ENCODE measurements at regions of chr11 and their contacts with region 1.

Region 1: DNA sequence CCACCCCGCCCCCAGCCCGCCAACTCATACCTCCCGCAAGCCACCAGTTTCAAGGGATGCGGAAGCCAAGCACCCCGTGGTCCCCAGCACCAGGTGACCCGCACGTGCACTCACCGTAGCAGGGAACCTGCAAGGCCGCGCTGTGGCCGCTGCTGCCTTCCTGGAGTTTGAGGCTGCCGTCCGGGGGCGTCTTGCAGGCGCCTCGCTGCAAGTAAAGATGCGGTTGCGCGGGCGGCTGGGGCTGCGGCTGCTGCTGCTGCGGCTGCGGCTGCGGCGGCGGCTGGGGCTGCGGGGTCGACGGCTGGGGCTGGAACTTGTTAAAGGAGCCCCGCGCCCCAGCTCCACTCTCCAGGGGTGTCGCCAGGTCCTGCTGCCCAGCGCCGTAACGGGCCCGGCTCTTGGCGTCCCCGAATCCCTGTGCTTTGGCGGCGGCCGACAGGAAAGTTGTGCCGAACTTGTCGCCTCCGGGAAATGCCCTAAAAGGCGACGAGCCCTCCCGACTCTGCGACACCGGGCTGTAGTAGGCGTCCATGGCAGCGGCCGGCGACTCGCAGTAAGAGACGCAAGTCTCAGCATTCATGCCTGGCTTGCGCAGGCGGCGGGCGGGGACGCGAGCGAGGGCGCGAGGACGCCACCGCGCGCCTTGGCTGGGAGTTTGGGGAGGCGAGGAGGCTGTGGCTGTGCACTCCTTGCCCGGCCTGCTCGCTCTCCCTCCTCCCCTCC is at the start of gene ALX4:
- DNase-seq: peak; percentile 71
- H3K4me3 Mint-ChIP-seq: peak within 1 kb of the TSS; percentile 51
- H3K27ac Mint-ChIP-seq: no peak within 1 kb of the TSS
- H3K4me1 Mint-ChIP-seq: peaks cover 24% of the 10 kb centered on the region
- H3K27me3 Mint-ChIP-seq: peaks cover 80% of the 10 kb centered on the region
- total RNA-seq, gene ALX4: not detected

Region 2: GRCh38 chr11:44319552-44320288 is 10.1 kb after region 1 on chr11:
- CTCF ChIA-PET with region 1: interaction called, 3 read pairs
- POLR2A ChIA-PET with region 1: no interaction called
- intact Hi-C with region 1: loop called (anchors 2 kb)
- DNase-seq: no peak
- H3K4me3 Mint-ChIP-seq: no peak overlapping the region
- H3K27ac Mint-ChIP-seq: no peak overlapping the region
- H3K4me1 Mint-ChIP-seq: peaks cover 15% of the 10 kb centered on the region
- H3K27me3 Mint-ChIP-seq: peaks cover 88% of the 10 kb centered on the region

Region 3: DNA sequence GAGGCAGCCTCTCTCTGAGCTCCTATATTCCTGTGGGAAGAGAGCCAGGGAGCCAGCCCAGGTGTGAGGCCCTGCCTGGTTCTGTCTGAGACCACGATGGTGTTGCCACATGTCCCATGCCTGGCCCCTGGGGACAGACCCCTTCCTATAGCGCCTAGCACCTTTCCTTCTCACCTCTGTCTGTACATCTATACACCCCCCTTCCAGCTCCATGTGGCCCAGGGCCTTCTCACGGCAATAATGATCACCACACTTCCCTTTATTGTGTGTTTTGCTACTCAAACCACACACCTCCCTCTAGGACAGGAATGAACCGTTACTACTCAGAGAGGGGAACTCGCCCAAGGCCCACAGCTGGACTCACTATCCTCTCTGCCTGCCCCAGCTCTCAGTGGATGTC is 268.6 kb after region 1 on chr11:
- CTCF ChIA-PET with region 1: no interaction called
- POLR2A ChIA-PET with region 1: no interaction called
- intact Hi-C with region 1: no loop called
- DNase-seq: peak; percentile 48
- H3K4me3 Mint-ChIP-seq: no peak overlapping the region
- H3K27ac Mint-ChIP-seq: peak overlapping the region; percentile 74
- H3K4me1 Mint-ChIP-seq: peaks cover 87% of the 10 kb centered on the region
- H3K27me3 Mint-ChIP-seq: no peaks in the 10 kb centered on the region

Measured in activated CD4-positive, alpha-beta memory T cell treated with anti-CD3 and anti-CD28 coated beads for 36 hours (primary cell).